ENCODE measurements at regions of chr6 and their contacts with region 1.

Region 1: DNA sequence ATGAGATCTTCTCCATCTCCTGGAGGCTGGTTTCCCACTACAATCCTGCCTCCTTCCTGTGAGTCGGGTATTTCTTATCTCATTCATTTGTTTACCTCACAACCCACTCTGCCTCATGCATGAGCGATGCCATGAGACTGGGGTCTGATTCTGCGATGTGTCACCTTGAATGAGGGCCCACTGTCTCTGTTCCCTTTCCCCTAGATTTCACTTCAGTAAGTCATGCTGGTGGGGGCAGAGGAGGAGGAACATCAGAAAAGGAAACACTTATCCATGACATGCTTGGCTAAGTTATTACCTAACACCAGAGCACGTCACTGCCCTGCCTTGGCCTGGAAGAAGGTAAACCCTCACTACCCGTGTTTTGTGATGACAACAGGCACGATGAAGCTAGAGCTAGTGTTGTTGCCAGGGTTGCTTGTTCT is 337.4 kb upstream of the PRDM1 start:
- DNase-seq: no peak
- H3K4me3 ChIP-seq: no peak overlapping the region
- H3K27ac ChIP-seq: peak overlapping the region in 1 of 4 donors; percentile 4
- H3K4me1 ChIP-seq: peaks cover 6 to 32% (median 8%) of the 10 kb centered on the region in 3 donors
- H3K27me3 ChIP-seq: no peaks in the 10 kb centered on the region
- CTCF ChIP-seq: no peak
- POLR2A ChIP-seq: no peak

Region 2: DNA sequence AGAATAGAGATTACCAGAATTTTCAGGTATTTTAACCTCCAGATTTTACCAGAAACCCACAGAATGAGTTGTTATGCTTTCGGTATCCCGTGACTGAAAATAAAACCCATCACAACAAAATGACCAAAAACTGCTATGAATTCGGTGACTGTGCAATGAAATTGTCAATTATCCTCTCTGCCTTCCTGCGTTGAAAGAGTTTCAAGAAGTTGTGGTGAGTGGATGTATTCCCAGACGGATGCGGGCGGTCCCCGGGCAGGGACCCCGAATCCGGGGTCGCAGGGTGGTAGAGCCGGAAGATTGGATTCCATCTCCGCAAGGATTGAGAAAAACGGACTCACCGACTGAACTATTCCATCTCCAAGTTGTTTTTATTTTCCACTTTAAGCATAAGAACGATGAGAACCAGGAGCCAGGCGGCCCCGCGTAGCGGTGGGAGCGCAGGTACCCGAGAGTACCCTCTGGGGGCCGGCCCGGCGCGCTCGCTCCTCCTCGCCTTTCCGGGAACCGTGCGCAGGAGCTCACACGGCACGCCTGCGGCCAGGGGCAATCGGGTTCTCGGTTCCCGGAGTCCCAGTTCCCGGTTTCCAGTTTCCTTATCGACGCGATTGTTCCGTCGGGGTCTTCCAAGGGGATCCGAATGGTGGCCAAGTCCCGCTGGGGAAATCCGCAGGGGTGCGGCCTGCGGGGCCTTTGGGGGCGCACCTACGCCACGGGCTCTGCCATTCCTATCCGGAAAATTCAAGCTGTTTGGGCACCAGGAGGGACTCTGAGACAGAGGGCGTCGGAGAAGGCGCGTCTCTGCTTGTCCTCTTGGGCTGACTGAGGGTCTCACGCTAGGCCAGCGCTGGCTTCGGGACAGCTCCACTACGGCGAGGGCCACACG is 232.5 kb after region 1 on chr6:
- intact Hi-C with region 1: loop called (anchors 10 kb)
- DNase-seq: no peak
- H3K4me3 ChIP-seq: peak overlapping the region; percentile 28 to 61 (median 40)
- H3K27ac ChIP-seq: no peak overlapping the region
- H3K4me1 ChIP-seq: peaks cover 0 to 21% (median 11%) of the 10 kb centered on the region in 3 donors
- H3K27me3 ChIP-seq: peaks cover 0 to 50% (median 0%) of the 10 kb centered on the region in 4 donors
- CTCF ChIP-seq: no peak
- POLR2A ChIP-seq: peak in 1 of 4 donors; percentile 15

Region 3: DNA sequence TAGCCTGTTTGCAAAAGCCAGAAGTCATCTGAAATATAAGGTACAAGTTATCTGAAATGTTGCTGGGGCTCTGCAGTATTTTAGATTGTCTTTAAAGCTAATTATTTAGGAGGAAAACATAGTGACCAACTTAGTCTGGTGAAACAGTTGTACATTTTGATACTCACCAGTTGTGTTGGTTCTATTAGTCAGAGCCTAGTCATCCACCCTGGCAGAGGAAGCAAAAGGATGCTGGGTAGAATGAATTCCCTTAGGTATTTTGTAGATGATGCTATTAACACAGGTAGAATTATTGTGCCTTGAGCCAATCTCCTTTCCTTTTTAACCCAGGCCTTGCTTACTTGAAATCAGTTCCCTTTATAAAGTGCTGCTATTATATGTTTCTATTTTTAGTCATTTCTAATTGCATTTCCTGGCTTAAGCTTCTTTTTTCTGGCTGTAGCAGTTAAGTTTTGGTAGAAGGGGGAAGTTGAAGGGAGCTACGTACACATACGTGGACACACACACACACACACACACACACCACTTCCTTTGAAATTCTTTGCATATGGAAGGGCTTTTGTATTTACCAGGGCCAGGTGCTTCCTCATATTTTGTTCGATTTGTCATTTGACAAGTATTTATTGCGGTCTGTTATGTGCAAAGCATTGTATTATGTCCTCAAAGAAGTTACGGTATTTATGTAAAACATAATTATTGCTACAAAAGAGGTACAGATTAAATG is 798.1 kb after region 1 on chr6:
- intact Hi-C with region 1: no loop called
- DNase-seq: no peak
- H3K4me3 ChIP-seq: no peak overlapping the region
- H3K27ac ChIP-seq: peak overlapping the region; percentile 68 to 80 (median 76)
- H3K4me1 ChIP-seq: peaks cover 0 to 47% (median 28%) of the 10 kb centered on the region in 3 donors
- H3K27me3 ChIP-seq: no peaks in the 10 kb centered on the region
- CTCF ChIP-seq: no peak
- POLR2A ChIP-seq: no peak

Measured in esophagus squamous epithelium (tissue), 5 donors.